Thyroid gland (tissue), 4 donors: ENCODE measurements at regions of chr10 and their contacts with region 1.

Region 1: DNA sequence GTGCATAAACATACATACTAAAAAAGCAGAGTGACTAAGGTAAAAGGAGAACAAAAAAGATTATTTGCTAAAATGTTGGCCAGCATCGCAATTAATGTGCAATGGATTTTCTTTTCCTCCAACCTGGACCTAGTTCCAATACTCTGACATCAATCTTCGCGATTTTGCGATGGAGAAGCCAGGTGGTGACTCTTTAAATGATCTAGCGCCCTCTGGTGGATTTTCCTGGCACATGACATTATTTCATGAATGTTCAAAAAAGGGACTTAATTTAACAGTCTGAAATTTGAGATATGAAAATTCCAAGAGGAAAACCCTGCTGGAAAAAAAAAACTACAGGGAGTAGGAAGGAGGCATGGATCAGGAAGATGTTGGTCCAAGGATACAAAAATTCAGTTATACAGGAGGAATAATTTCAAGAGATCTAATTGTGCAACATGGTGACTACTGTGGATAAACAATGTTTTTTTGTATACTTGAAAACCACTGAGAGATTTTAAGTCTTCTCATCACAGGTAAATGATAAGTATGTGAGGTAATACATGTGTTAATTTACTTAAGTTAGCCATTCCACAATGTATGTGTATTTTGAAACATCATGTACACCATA is 4.3 kb upstream of the KCNMA1 start:
- DNase-seq: peak; percentile 66 to 72
- H3K4me3 ChIP-seq: no peak overlapping the region
- H3K27ac ChIP-seq: no peak overlapping the region
- H3K4me1 ChIP-seq: peaks cover 0 to 11% of the 10 kb centered on the region in 2 donors
- H3K27me3 ChIP-seq: peaks cover 9% of the 10 kb centered on the region
- CTCF ChIP-seq: peak; percentile 67 to 89 (median 78)
- POLR2A ChIP-seq: no peak

Region 2: DNA sequence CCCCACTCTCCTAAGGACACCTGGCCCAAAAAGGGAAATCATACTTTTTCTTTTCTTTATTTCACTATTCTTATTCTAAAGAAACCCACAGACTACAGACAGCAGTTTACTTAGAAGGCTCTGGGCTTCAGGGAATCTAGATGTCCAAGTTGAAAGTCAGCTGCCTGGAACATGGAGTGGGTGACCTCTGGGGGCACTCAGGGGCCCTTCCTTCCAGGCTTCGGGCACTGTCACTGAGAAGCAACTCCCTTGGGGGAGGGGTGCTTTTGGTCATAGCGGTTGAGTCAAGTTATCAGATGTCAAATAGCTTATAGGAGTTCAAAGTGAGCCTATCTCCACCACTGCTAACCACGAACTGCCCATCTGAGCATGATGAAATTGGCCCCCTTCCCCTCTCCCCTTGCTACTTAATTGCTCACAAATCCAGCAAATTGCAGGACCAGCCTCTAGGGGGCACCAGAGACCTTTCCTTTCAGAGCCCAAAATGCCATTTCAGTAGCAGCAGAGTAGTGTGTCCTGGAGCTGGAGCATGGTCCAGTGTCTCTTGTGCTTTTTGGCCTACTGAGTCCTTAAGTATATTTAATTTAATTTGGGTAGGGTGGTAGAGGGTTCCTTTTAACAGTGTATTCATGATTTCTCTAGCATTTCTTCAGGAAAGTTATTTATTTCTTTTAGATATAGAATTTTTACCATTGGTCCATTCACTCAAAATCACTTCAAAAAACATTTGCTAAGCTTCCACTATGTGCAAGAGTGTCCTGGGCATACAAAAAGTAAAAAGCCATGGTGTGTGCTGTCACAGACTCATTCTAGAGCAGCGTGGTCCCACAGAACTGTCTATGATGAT is 468.1 kb before region 1 on chr10:
- intact Hi-C with region 1: loop called (anchors 2 kb)
- DNase-seq: peak; percentile 71 to 77
- H3K4me3 ChIP-seq: no peak overlapping the region
- H3K27ac ChIP-seq: no peak overlapping the region
- H3K4me1 ChIP-seq: no peaks in the 10 kb centered on the region
- H3K27me3 ChIP-seq: no peaks in the 10 kb centered on the region
- CTCF ChIP-seq: peak; percentile 75 to 93 (median 87)
- POLR2A ChIP-seq: no peak

Region 3: GRCh38 chr10:77391605-77392235 is 250.2 kb before region 1 on chr10:
- intact Hi-C with region 1: loop called (anchors 2 kb)
- DNase-seq: peak; percentile 66 to 79
- H3K4me3 ChIP-seq: no peak overlapping the region
- H3K27ac ChIP-seq: no peak overlapping the region
- H3K4me1 ChIP-seq: no peaks in the 10 kb centered on the region
- H3K27me3 ChIP-seq: no peaks in the 10 kb centered on the region
- CTCF ChIP-seq: peak in 5 of 6 experiments; percentile 24 to 70 (median 61)
- POLR2A ChIP-seq: no peak

Region 4: GRCh38 chr10:77810446-77811335 is 168.8 kb after region 1 on chr10:
- intact Hi-C with region 1: no loop called
- DNase-seq: peak; percentile 77 to 84
- H3K4me3 ChIP-seq: no peak overlapping the region
- H3K27ac ChIP-seq: peak overlapping the region; percentile 6 to 24 (median 15)
- H3K4me1 ChIP-seq: peaks cover 0 to 14% of the 10 kb centered on the region in 2 donors
- H3K27me3 ChIP-seq: no peaks in the 10 kb centered on the region
- CTCF ChIP-seq: no peak
- POLR2A ChIP-seq: no peak